ENCODE measurements at regions of chr19 and their contacts with region 1.

Region 1: GRCh38 chr19:46661020-46661731 is at the start of gene DACT3:
- DNase-seq: peak; percentile 99 to 100 (median 99)
- H3K4me3 ChIP-seq: peak within 1 kb of the TSS; percentile 48 to 64
- H3K4me3 Mint-ChIP-seq: peak within 1 kb of the TSS; percentile 82 to 88 (median 84)
- H3K27ac ChIP-seq: peak within 1 kb of the TSS; percentile 44
- H3K27ac Mint-ChIP-seq: peak within 1 kb of the TSS; percentile 76 to 97 (median 91)
- H3K4me1 ChIP-seq: peaks cover 27% of the 10 kb centered on the region
- H3K4me1 Mint-ChIP-seq: peaks cover 10 to 31% (median 15%) of the 10 kb centered on the region in 4 donors
- H3K27me3 ChIP-seq: peaks cover 18% of the 10 kb centered on the region
- H3K27me3 Mint-ChIP-seq: peaks cover 10 to 19% of the 10 kb centered on the region in 2 donors
- total RNA-seq, gene DACT3: not detected

Region 2: DNA sequence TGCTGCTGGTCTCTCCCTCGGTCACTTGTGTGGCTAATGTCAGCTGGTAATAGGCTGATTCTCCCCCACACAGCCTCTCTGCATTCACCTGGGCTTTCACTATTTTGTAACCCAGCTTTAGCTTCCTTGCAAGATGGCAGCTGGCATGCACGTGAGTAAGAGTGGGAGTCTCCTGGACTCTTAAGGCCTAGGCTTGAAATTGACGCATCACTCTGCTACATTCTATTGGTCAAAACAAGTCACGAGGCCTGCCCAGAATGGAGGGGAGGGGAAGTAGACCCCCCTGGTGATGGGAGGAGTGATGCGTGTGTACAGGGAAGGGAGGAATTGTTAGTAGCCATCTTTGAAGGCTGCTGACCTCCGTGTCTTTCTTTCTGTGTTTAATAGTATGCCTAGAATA is 140.6 kb before region 1 on chr19:
- CTCF ChIA-PET with region 1: interaction called, 17 read pairs
- POLR2A ChIA-PET with region 1: interaction called, 3 read pairs
- intact Hi-C with region 1: no loop called
- DNase-seq: no peak
- H3K4me3 ChIP-seq: no peak overlapping the region
- H3K4me3 Mint-ChIP-seq: peak overlapping the region in 1 of 8 donors; percentile 45
- H3K27ac ChIP-seq: no peak overlapping the region
- H3K27ac Mint-ChIP-seq: peak overlapping the region in 3 of 7 donors; percentile 22 to 81 (median 78)
- H3K4me1 ChIP-seq: peaks cover 57% of the 10 kb centered on the region
- H3K4me1 Mint-ChIP-seq: peaks cover 22 to 68% (median 45%) of the 10 kb centered on the region in 4 donors
- H3K27me3 ChIP-seq: no peaks in the 10 kb centered on the region
- H3K27me3 Mint-ChIP-seq: peaks cover 0 to 3% of the 10 kb centered on the region in 2 donors

Region 3: DNA sequence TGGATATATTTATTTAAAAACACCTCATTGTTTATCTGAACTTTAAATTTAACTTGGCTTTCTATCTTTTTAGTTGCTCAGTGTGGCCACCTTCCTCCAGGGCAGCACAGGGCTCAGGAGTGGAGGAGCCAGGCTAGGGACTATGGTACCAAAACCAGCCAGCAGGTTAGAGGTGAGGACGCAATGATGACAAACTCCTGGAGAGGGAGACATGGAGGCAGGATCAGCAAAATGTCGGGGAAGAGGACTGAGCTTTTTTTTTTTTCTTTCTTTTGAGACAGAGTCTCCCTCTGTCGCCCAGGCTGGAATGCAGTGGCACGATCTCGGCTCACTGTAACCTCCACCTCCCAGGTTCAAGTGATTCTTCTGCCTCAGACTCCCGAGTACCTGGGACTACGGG is 89.6 kb before region 1 on chr19:
- CTCF ChIA-PET with region 1: no interaction called
- POLR2A ChIA-PET with region 1: no interaction called
- intact Hi-C with region 1: no loop called
- DNase-seq: no peak
- H3K4me3 ChIP-seq: no peak overlapping the region
- H3K4me3 Mint-ChIP-seq: no peak overlapping the region
- H3K27ac ChIP-seq: no peak overlapping the region
- H3K27ac Mint-ChIP-seq: no peak overlapping the region
- H3K4me1 ChIP-seq: peaks cover 11% of the 10 kb centered on the region
- H3K4me1 Mint-ChIP-seq: peaks cover 7 to 17% (median 17%) of the 10 kb centered on the region in 4 donors
- H3K27me3 ChIP-seq: no peaks in the 10 kb centered on the region
- H3K27me3 Mint-ChIP-seq: peaks cover 2 to 4% of the 10 kb centered on the region in 2 donors

Region 4: GRCh38 chr19:46600384-46601317 is 60.5 kb before region 1 on chr19:
- CTCF ChIA-PET with region 1: interaction called, 16 read pairs
- POLR2A ChIA-PET with region 1: interaction called, 24 read pairs
- intact Hi-C with region 1: no loop called
- DNase-seq: peak; percentile 97 to 99 (median 98)
- H3K4me3 ChIP-seq: peak overlapping the region; percentile 80 to 90
- H3K4me3 Mint-ChIP-seq: peak overlapping the region; percentile 98 to 99 (median 99)
- H3K27ac ChIP-seq: peak overlapping the region; percentile 97
- H3K27ac Mint-ChIP-seq: peak overlapping the region; percentile 100
- H3K4me1 ChIP-seq: peaks cover 36% of the 10 kb centered on the region
- H3K4me1 Mint-ChIP-seq: peaks cover 10 to 46% (median 30%) of the 10 kb centered on the region in 4 donors
- H3K27me3 ChIP-seq: no peaks in the 10 kb centered on the region
- H3K27me3 Mint-ChIP-seq: peaks cover 0 to 4% of the 10 kb centered on the region in 2 donors

Region 5: GRCh38 chr19:46607448-46607841 is 53.7 kb before region 1 on chr19:
- CTCF ChIA-PET with region 1: interaction called, 188 read pairs
- POLR2A ChIA-PET with region 1: interaction called, 43 read pairs
- intact Hi-C with region 1: no loop called
- DNase-seq: no peak
- H3K4me3 ChIP-seq: no peak overlapping the region
- H3K4me3 Mint-ChIP-seq: no peak overlapping the region
- H3K27ac ChIP-seq: no peak overlapping the region
- H3K27ac Mint-ChIP-seq: peak overlapping the region in 1 of 7 donors; percentile 60
- H3K4me1 ChIP-seq: peaks cover 61% of the 10 kb centered on the region
- H3K4me1 Mint-ChIP-seq: peaks cover 40 to 85% (median 58%) of the 10 kb centered on the region in 4 donors
- H3K27me3 ChIP-seq: no peaks in the 10 kb centered on the region
- H3K27me3 Mint-ChIP-seq: no peaks in the 10 kb centered on the region

Region 6: DNA sequence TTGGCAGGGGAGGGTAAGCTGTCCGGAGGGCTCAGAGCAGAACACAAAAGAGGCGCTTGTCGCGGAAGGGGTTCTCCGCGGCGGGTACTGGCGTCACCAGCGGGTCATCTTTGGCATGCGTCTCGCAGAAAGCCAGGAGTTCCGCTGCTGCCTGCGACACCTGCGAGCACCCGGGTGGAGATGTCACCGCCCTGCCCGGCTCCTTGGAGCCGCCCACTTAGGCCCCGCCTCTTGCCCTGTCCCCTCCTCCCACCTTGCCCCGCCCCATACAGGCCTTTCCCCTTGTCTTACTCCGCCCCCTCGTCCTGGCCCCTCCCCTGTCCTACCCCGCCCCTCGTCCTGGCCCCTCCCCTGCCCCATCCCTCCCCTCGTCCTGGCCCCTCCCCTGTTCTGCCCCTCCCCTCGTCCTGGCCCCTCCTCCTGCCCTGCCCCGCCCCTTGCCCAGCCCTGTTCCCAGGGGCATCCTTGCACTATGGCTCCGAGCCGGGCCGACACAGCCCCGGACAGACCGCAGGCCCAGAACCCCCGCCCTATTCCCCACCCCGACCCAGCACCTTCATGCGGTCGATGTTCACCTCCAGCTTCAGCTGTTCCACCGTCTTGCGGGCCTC is 27.0 kb before region 1 on chr19:
- CTCF ChIA-PET with region 1: interaction called, 17 read pairs
- POLR2A ChIA-PET with region 1: interaction called, 4 read pairs
- intact Hi-C with region 1: loop called (anchors 1 kb)
- DNase-seq: peak; percentile 93 to 98 (median 94)
- H3K4me3 ChIP-seq: peak overlapping the region; percentile 61 to 64
- H3K4me3 Mint-ChIP-seq: peak overlapping the region; percentile 68 to 88 (median 81)
- H3K27ac ChIP-seq: peak overlapping the region; percentile 57
- H3K27ac Mint-ChIP-seq: peak overlapping the region; percentile 87 to 94 (median 93)
- H3K4me1 ChIP-seq: peaks cover 33% of the 10 kb centered on the region
- H3K4me1 Mint-ChIP-seq: peaks cover 14 to 28% (median 22%) of the 10 kb centered on the region in 4 donors
- H3K27me3 ChIP-seq: no peaks in the 10 kb centered on the region
- H3K27me3 Mint-ChIP-seq: peaks cover 0 to 1% of the 10 kb centered on the region in 2 donors

Region 7: DNA sequence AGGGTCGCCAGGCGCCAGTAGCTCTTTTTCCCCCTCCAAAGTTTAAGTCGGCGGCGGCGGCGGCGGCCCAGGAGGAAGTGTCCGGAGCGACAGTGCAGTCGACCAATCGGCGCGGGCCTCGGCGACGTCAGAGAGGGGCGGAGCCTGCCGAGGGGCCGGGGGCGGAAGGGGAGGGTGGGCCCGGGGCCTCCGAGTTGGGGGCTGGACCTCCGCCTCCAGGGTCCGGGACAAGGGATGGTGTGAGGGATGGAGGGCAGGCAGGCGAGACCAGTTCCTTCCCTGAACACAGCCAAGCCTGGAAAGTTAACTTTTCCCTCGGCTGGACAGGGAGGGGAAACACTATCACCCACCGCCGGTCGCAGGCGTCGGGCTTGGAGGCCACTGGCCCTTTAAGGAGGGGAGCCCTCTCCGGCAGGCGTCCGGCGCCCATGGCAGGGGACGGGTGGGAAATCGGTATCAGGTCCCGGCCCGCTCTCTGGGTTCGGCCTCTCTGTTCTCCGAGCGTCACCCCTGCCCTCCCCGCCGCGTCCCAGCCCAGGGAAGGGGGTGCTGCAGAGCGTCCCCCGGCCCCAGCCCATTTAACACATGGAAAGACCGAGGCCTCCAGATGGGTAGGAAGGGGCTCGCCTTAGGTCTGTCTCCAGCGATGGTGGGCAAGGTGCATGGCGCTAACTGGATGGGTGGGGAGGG is 56.0 kb after region 1 on chr19 and contains the start of gene PRKD2:
- CTCF ChIA-PET with region 1: interaction called, 5 read pairs
- POLR2A ChIA-PET with region 1: interaction called, 7 read pairs
- intact Hi-C with region 1: loop called (anchors 2 kb)
- DNase-seq: peak; percentile 76 to 85 (median 79)
- H3K4me3 ChIP-seq: peak within 1 kb of the TSS; percentile 82 to 94
- H3K4me3 Mint-ChIP-seq: peak within 1 kb of the TSS; percentile 93 to 98 (median 94)
- H3K27ac ChIP-seq: peak within 1 kb of the TSS; percentile 95
- H3K27ac Mint-ChIP-seq: peak within 1 kb of the TSS; percentile 97 to 99 (median 98)
- H3K4me1 ChIP-seq: peaks cover 44% of the 10 kb centered on the region
- H3K4me1 Mint-ChIP-seq: peaks cover 23 to 64% (median 37%) of the 10 kb centered on the region in 4 donors
- H3K27me3 ChIP-seq: no peaks in the 10 kb centered on the region
- H3K27me3 Mint-ChIP-seq: no peaks in the 10 kb centered on the region
- total RNA-seq, gene PRKD2: 115 to 122 TPM